ENCODE measurements at regions of chr11 and their contacts with region 1.

Region 1: GRCh38 chr11:4187055-4187988 is 92.7 kb downstream of the RRM1 start:
- DNase-seq: peak; percentile 97

Region 2: DNA sequence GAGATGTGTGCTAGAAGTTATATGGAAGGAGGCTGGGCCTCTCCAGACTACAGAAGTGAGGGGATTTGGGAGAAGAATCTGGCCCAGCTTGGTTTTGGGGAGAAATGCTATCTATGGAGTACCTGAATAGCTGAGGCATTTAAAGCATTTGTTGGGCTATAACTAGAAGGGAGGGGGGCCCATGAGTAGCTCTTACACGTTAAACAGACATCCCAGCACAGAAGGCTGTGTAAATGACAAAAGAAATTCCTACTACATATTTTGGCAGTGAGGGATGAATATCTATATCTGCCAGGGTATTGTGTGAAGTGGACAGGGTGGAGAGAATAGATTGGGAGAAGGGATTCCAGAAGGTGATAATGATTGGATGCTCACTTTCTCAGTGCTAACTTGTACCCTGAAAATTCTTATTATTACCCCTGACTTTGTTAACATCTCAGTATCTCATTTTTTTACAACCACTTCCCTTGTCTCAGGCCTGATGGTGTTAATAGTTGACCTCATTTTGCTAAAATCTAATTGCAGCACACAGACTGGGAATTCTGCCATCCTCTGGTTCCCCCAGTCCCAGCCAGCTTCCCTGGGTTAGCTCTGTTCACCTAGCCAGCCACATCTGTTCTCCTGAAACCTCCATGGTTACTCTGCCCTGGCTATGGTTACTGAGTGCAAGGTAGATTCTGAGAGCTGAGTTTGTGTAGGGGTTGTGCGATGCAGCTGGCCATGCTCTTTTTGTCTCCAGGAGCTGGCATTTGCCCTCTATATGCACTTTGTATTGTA is 121.5 kb before region 1 on chr11:
- intact Hi-C with region 1: no loop called
- DNase-seq: no peak

Region 3: DNA sequence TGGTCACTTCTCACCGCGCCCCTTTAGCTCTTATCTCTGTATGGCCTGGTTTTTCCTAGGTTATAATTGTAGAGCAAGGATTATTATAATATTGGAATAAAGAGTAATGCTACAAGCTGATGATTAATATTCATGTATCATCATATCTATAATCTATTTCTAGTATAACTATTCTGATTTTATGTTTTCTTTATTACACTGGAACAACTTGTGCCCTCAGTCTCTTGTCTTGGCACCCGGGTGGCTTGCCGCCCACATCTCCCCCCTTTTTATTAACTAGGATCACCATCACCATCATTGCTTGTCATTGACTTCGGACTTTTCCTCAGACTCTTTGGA is 306.1 kb after region 1 on chr11:
- intact Hi-C with region 1: loop called (anchors 2 to 5 kb)
- DNase-seq: no peak